GM10248 (cell line): ENCODE measurements at regions of chr2 and their contacts with region 1.

Region 1: GRCh38 chr2:30239308-30239985 is 8.1 kb downstream of the LBH start:
- DNase-seq: peak; percentile 58
- CTCF ChIP-seq: peak; percentile 63

Region 2: GRCh38 chr2:30197564-30198192 is 41.8 kb before region 1 on chr2:
- CTCF ChIA-PET with region 1: no interaction called
- POLR2A ChIA-PET with region 1: no interaction called
- DNase-seq: no peak
- CTCF ChIP-seq: no peak

Region 3: DNA sequence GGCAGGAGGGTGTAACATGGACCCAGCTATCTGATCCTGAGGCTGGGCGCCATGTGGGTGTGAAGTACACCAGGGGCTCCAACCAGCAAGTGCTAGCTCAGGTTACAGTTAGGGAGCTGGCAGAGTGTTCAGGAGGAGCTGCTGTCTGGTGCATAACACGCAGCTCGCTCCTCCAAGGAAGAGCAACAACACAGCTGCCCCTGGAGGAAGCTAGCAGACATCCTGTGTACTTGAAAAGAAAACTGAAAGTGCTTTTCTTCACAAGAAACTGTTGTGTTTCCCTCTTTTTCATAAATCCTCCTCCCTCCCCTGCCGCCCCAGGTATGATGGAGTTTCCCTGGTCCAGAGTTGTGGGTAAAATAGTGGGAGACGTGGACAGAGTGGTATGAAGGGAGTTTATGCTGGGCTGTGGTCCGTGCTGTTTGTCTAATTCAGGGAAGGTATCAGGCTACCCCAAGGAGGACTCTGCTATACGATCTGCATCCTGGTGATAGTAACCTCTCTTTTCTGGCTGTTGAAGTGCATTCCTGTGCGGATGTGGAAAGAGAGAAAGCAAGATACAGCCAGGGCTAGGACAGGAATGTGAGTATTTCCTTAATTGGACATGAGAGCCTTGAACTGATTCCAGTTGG is 14.2 kb before region 1 on chr2:
- CTCF ChIA-PET with region 1: interaction called, 16 read pairs
- POLR2A ChIA-PET with region 1: interaction called, 4 read pairs
- DNase-seq: peak; percentile 55
- CTCF ChIP-seq: no peak

Region 4: DNA sequence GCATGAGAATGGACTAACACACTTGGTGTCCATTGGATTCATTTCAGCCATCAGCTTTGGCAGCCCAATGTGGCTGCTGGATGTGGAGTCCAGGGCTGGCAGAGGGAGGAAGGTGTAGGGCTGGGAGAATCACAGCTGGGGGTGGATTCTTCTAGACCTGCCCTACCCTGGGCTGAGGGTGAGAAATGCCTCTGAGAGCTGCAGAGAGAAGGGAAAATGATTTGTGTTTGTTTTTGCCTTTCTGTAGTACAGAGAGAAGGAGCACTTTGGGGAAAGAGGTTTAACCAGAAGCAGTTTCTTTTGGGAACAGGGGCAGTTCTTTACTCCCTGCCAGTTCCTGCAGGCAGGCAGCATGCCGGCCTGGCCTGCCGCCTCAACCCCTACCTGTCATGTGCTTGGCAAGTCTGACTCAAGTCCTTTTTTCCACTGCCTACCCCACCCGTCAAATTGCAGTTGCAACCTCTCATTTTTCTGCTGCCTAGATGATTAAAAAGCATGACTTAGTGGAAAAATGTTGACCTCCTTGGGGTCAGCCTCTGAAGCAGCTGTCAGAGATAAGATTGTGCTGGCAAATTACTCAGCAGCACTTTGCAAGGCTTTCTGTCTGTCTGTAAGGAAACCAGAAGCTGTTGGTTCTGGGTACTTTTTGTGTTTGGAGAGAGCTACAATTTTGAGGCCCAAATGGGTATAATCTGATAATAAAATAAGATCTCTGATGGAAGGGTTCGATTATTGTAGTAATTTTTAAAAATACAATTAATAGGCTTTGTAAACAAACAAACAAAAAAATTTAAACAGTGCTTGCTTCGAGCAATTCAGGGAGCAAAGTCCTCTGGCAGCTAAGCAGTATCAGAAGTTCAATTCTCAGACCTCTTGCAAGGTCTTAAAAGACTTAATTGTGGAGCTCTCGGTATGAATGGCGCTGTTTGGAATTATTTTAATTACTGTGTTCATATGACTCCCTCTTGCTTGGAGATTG is 13.6 kb after region 1 on chr2:
- CTCF ChIA-PET with region 1: interaction called, 19 read pairs
- POLR2A ChIA-PET with region 1: no interaction called
- DNase-seq: peak; percentile 44
- CTCF ChIP-seq: no peak

Region 5: DNA sequence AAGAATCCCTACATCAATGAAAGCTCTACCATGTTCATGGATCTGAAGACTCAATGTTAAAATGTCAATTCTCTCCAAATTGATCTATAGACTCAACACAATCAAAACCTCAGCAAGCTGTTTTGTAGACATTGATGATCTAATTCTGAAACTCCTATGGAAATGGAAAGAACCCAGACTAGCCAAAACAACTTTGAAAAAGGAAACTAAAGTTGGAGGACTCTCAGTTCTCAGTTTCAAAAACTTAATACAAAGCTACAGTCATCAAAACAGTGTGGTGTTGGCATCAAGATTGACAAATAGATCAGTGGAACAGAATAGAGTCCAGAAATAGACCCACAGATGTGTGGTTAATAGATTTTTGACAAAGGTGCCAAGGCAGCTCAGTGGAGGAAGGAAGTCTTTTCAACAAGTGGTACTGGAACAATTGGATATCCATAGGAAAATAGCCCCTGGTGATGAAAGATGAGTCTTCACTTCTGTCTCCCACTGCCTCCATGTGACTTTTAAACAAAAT is 22.3 kb after region 1 on chr2:
- CTCF ChIA-PET with region 1: interaction called, 19 read pairs
- POLR2A ChIA-PET with region 1: no interaction called
- DNase-seq: no peak
- CTCF ChIP-seq: no peak

Region 6: DNA sequence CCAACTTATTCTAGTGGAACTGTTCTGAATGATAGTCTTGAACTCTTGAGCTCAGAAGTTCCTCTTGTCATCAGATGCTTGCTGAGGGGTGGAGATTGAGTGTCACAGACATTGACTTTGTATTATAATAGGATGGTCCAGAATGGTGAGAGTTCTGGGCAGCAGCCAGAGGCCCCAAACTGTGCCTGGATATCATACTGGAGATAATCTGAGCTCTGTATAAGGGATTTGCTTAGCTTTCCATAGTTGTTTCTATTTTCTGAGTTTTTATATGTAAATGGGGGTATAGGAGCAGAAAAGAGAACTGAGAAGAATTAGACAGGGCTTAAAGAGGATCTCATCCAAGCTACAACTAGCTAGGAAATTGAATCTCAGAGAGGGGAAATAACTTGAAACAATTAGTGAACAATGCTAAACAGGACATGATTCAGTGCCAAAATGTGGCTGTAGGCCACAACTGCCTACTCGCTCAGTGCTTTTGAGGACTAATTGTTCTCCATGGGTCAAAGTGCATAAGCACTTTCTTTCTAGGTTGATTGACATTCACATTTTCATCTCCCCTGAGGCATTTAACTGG is 197.5 kb after region 1 on chr2:
- CTCF ChIA-PET with region 1: no interaction called
- POLR2A ChIA-PET with region 1: no interaction called
- DNase-seq: no peak
- CTCF ChIP-seq: no peak